ENCODE measurements at regions of chr9 and their contacts with region 1.

Region 1: GRCh38 chr9:89477811-89478630 is 19.9 kb downstream of the SEMA4D start:
- DNase-seq: peak; percentile 95
- H3K4me3 ChIP-seq: peak overlapping the region in 1 of 3 experiments; percentile 19
- H3K27ac ChIP-seq: peak overlapping the region; percentile 74
- H3K4me1 ChIP-seq: peaks cover 25% of the 10 kb centered on the region
- H3K27me3 ChIP-seq: no peaks in the 10 kb centered on the region
- CTCF ChIP-seq: peak in 1 of 2 donors; percentile 5
- POLR2A ChIP-seq: no peak

Region 2: GRCh38 chr9:89179895-89180667 is 297.9 kb before region 1 on chr9:
- CTCF ChIA-PET with region 1: no interaction called
- POLR2A ChIA-PET with region 1: no interaction called
- dilution Hi-C with region 1: no loop called
- intact Hi-C with region 1: loop called (anchors 10 kb)
- DNase-seq: peak; percentile 97
- H3K4me3 ChIP-seq: peak overlapping the region; percentile 2 to 60 (median 34)
- H3K27ac ChIP-seq: peak overlapping the region; percentile 83
- H3K4me1 ChIP-seq: peaks cover 31% of the 10 kb centered on the region
- H3K27me3 ChIP-seq: peaks cover 13 to 20% of the 10 kb centered on the region in 2 experiments
- CTCF ChIP-seq: no peak
- POLR2A ChIP-seq: peak; percentile 85

Region 3: DNA sequence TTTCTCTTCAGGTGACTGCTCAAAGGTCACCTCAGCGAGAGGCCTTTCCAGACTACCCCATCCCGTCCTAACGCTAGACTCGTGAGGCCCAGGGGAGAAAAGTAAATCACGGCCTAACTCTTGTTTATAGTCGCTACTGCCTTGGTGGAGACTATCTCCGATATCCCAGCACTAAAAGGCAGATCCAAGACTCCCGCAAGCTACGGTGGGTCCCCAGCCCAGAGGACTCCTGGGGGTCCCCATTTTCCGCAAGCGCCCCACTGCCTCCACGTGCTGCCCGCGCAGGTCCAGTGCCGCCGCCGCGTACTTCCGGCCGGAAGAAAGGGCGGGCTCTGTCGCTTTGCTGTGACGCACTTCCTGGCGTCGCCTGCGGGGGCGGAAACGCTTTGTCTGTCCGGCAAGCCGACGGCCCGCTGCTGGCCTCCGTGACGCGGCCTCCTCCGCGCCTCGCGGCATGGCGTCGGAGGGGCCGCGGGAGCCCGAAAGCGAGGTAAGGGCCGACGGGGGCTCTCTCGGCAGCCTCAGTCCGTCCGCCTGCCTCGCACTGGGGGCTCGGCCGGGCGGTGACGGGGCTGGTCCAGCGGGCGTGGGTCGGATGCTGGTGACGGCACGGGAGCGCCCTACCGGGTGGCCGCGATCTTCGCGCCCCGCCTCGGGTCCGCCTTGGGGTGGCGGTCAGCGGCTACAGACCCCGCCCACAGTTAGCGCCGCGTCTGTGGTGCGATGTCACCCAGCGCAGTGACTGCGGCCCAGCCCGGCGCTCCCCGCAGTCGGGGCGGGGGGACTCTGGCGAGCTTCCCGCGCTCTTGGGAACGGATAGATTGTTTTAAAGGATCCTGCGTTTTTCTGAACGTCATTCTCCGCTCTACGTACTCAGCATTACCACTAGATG is 159.7 kb before region 1 on chr9 and contains the start of gene SECISBP2:
- CTCF ChIA-PET with region 1: no interaction called
- POLR2A ChIA-PET with region 1: no interaction called
- dilution Hi-C with region 1: no loop called
- intact Hi-C with region 1: loop called (anchors 2 kb)
- DNase-seq: peak; percentile 98
- H3K4me3 ChIP-seq: peak within 1 kb of the TSS; percentile 58 to 94 (median 84)
- H3K27ac ChIP-seq: peak within 1 kb of the TSS; percentile 100
- H3K4me1 ChIP-seq: peaks cover 36% of the 10 kb centered on the region
- H3K27me3 ChIP-seq: no peaks in the 10 kb centered on the region
- CTCF ChIP-seq: peak; percentile 68 to 78
- POLR2A ChIP-seq: peak; percentile 97
- total RNA-seq, gene SECISBP2: 34.1 and 36.3 TPM in 2 replicates

Region 4: DNA sequence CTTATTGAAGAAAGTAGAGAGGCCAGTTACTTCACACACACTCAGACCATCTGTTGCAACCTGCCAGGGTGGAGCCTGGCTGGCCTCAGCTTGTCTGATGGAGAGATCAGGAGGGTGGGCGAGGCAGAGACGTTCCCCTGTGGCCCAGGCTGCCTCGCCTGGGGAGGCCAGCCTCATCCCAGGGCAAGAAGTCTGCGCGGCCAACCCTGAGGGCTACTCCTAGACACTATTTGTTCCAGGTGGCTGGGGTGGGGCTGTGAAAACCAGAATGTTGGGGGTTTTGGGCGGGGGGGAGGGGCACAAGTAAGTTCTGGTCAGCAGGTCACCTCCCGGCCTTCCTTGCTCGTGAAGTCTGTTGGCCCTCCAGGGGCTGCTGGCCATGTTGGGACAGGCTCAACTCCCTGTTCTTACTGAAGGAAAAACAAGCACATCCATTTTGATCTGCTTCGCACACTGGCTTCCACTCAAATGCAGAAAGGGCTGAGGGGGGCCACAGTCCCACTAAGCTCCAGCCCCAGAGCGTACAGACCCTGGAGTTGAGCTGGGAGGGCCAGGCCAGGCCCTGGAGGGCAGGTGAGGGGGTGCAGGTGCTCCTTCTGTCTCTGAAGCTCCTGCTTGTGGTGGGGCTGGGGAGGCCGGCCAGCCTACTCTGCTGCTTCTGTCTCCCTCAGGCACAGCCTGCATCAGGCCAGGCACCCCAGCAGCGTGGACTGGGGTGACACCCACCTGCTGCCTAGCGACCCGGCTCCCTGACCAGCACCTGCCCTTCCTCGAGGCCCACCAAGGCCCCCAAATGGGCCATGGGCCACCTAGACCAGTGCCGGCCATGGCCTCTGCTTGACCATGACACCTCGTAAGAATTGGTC is 113.1 kb before region 1 on chr9:
- CTCF ChIA-PET with region 1: no interaction called
- POLR2A ChIA-PET with region 1: no interaction called
- dilution Hi-C with region 1: no loop called
- intact Hi-C with region 1: loop called (anchors 5 kb)
- DNase-seq: no peak
- H3K4me3 ChIP-seq: no peak overlapping the region
- H3K27ac ChIP-seq: no peak overlapping the region
- H3K4me1 ChIP-seq: peaks cover 3% of the 10 kb centered on the region
- H3K27me3 ChIP-seq: no peaks in the 10 kb centered on the region
- CTCF ChIP-seq: no peak
- POLR2A ChIP-seq: no peak

Region 5: DNA sequence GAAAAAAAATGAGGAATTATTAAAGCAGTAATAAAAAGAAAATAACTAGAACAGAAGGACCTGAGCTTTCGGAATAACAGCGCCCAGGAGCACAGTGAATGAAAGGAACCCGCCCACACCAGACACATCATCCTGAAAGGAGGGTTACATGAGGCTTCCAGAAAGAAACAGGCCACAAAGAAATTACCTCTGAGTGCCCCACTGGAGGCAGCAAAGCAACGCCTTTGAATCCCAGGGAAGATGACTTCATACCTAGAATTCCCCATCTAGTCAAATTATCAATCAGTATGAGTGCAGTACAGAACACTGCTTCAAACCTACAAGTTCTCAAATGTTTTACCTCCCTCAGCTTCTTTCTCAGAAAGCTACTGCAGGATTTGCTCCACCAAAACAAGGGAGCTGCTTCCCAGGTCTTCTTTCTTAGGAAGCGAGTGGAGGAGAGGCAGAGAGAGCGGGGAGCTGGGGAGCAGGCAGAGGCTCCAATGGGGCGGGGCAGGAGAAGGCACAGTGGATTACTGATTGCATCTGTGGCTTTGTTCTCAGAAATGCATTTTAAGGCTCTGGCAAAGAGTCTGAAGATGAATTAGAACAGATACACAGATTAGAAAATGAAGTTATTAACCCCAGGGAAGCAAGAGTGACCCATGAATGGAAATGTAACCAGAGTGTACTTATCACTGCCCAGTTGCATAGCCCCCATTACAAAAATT is 67.2 kb before region 1 on chr9:
- CTCF ChIA-PET with region 1: no interaction called
- POLR2A ChIA-PET with region 1: no interaction called
- dilution Hi-C with region 1: no loop called
- intact Hi-C with region 1: no loop called
- DNase-seq: no peak
- H3K4me3 ChIP-seq: no peak overlapping the region
- H3K27ac ChIP-seq: no peak overlapping the region
- H3K4me1 ChIP-seq: peaks cover 2% of the 10 kb centered on the region
- H3K27me3 ChIP-seq: no peaks in the 10 kb centered on the region
- CTCF ChIP-seq: no peak
- POLR2A ChIP-seq: no peak

Region 6: GRCh38 chr9:89497978-89498851 is 20.2 kb after region 1 on chr9 and contains the start of gene SEMA4D:
- CTCF ChIA-PET with region 1: no interaction called
- POLR2A ChIA-PET with region 1: no interaction called
- dilution Hi-C with region 1: no loop called
- intact Hi-C with region 1: loop called (anchors 1 kb)
- DNase-seq: peak; percentile 45
- H3K4me3 ChIP-seq: peak within 1 kb of the TSS; percentile 40 to 85 (median 79)
- H3K27ac ChIP-seq: no peak within 1 kb of the TSS
- H3K4me1 ChIP-seq: peaks cover 4% of the 10 kb centered on the region
- H3K27me3 ChIP-seq: peaks cover 2 to 4% of the 10 kb centered on the region in 2 experiments
- CTCF ChIP-seq: no peak
- POLR2A ChIP-seq: no peak
- total RNA-seq, gene SEMA4D: 14.6 and 15.7 TPM in 2 replicates